Calu3 (cell line): ENCODE measurements at regions of chr9 and their contacts with region 1.

Region 1: DNA sequence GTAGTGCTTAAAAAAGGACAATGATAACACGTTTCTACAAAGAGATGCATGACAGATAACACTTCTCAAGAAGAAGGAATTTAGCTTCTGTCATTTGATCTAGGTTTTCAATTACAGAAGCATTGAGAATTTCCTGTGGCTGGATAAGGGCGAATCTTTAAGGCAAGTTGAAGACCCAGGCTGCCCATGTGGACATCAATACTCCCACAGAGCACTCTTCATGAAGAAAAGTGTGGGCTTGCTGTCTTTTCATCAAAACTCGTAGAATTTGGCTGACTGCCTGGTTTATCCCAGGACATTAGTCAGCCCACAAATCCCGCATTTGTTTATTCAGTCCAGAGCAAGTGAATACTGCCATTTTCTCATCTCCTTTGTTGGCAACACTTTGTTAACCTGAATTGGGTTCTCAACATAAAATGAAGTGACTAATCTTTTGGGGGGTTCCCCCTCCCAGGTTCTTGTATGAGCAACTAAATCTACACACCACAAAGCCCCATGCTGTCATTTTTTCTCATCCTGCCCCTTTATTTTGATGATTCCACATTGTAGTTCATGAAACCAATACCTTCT is 43.4 kb upstream of the CDKN2B start:
- DNase-seq: peak; percentile 53
- H3K4me3 Mint-ChIP-seq: no peak overlapping the region
- H3K27ac Mint-ChIP-seq: peak overlapping the region; percentile 59
- H3K4me1 Mint-ChIP-seq: peaks cover 22% of the 10 kb centered on the region
- H3K27me3 Mint-ChIP-seq: no peaks in the 10 kb centered on the region
- CTCF ChIP-seq: no peak

Region 2: DNA sequence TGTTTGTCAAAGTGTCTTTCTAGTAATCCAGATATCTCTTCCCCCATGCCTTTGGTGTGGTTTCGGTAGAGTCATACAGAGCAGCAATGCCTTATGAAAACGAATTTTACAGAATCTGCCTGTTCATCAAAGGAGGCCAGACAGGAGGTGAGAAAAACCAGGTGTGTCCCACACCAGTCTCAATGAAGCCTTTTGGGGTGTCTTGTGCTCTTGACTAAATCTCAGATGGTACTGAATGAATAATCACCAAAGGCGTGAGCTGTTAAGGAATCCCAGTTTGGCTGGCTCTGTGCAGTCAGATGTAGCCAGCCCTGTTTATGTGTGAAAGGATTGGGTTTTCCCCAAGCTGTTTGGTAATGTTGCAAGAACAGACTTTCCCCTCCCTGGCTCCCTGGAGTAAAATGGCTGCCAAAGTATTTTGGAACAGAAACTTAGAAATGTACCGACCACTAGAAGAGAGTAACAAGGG is 27.4 kb after region 1 on chr9:
- CTCF ChIA-PET with region 1: no interaction called
- intact Hi-C with region 1: loop called (anchors 5 kb)
- DNase-seq: peak; percentile 11
- H3K4me3 Mint-ChIP-seq: no peak overlapping the region
- H3K27ac Mint-ChIP-seq: no peak overlapping the region
- H3K4me1 Mint-ChIP-seq: peaks cover 35% of the 10 kb centered on the region
- H3K27me3 Mint-ChIP-seq: no peaks in the 10 kb centered on the region
- CTCF ChIP-seq: no peak

Region 3: DNA sequence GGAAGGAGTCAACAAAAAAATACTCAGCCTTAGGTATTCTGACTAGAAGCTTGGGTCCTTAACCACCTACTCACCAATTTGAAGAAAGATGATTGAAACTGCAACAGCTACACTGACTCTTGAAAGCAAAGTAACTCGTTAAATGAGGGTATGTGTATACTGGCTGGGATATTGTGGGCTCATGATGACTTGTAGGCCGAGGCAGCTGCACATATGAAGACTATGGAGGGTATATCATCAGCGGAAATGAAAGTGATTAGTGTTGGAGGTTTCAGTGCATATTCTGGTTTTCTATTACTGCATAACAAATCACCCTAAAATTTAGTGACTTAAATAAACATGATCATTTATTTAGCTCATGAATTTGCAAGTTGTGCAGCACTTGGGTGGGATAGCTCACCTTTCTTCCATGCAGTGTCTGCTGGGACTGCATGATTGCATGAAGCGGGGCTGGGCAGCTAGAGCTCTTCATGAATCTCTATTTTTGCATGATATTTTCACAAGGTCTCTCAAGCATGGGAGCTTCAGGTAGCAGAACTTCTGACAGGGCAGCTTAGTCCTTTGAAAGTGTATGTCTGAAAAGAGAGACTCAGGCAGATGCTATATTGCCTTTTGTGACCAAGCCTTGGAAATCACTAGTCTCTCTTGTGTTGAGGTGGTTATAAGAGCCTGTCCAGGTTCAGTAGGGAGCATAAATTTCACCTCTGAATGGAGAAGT is 52.7 kb after region 1 on chr9:
- CTCF ChIA-PET with region 1: no interaction called
- intact Hi-C with region 1: loop called (anchors 2 kb)
- DNase-seq: no peak
- H3K4me3 Mint-ChIP-seq: no peak overlapping the region
- H3K27ac Mint-ChIP-seq: peak overlapping the region; percentile 86
- H3K4me1 Mint-ChIP-seq: peaks cover 69% of the 10 kb centered on the region
- H3K27me3 Mint-ChIP-seq: no peaks in the 10 kb centered on the region
- CTCF ChIP-seq: no peak

Region 4: GRCh38 chr9:22119537-22120158 is 67.2 kb after region 1 on chr9:
- CTCF ChIA-PET with region 1: interaction called, 4 read pairs
- intact Hi-C with region 1: loop called (anchors 5 kb)
- DNase-seq: peak; percentile 21
- H3K4me3 Mint-ChIP-seq: no peak overlapping the region
- H3K27ac Mint-ChIP-seq: peak overlapping the region; percentile 93
- H3K4me1 Mint-ChIP-seq: peaks cover 61% of the 10 kb centered on the region
- H3K27me3 Mint-ChIP-seq: no peaks in the 10 kb centered on the region
- CTCF ChIP-seq: no peak